ENCODE measurements at regions of chr7 and their contacts with region 1.

Region 1: GRCh38 chr7:142811154-142811737 is 40.5 kb downstream of the PRSS2 start:
- DNase-seq: no peak
- ATAC-seq: no peak
- H3K4me3 Mint-ChIP-seq: peak overlapping the region; percentile 69
- H3K27ac Mint-ChIP-seq: peak overlapping the region; percentile 99
- H3K4me1 Mint-ChIP-seq: peaks cover 76% of the 10 kb centered on the region
- H3K27me3 Mint-ChIP-seq: no peaks in the 10 kb centered on the region

Region 2: GRCh38 chr7:142535123-142535779 is 276.0 kb before region 1 on chr7:
- POLR2A ChIA-PET with region 1: interaction called, 23 read pairs
- DNase-seq: peak; percentile 73
- ATAC-seq: peak; percentile 91
- H3K4me3 Mint-ChIP-seq: peak overlapping the region; percentile 76
- H3K27ac Mint-ChIP-seq: peak overlapping the region; percentile 88
- H3K4me1 Mint-ChIP-seq: peaks cover 22% of the 10 kb centered on the region
- H3K27me3 Mint-ChIP-seq: peaks cover 2% of the 10 kb centered on the region

Region 3: DNA sequence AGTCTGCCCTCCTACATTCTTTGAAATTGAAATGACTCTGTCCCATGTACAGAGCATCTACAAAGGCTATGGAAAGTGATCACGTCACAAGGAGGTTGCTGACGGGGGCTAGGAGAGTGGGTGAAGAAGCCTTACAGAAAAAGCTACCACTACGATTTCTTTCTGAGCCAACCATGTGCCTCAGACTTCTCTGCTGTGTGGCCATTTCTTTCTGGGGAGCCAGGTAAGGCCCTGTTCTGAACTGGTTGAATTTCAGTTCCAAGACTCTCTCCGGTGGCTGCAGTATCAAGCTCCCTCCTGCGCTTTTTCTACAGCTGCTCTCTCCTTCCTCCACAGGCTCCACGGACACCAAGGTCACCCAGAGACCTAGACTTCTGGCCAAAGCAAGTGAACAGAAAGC is 174.5 kb before region 1 on chr7:
- POLR2A ChIA-PET with region 1: interaction called, 12 read pairs
- DNase-seq: no peak
- ATAC-seq: peak; percentile 61
- H3K4me3 Mint-ChIP-seq: peak overlapping the region; percentile 94
- H3K27ac Mint-ChIP-seq: peak overlapping the region; percentile 99
- H3K4me1 Mint-ChIP-seq: peaks cover 13% of the 10 kb centered on the region
- H3K27me3 Mint-ChIP-seq: peaks cover 6% of the 10 kb centered on the region

Region 4: DNA sequence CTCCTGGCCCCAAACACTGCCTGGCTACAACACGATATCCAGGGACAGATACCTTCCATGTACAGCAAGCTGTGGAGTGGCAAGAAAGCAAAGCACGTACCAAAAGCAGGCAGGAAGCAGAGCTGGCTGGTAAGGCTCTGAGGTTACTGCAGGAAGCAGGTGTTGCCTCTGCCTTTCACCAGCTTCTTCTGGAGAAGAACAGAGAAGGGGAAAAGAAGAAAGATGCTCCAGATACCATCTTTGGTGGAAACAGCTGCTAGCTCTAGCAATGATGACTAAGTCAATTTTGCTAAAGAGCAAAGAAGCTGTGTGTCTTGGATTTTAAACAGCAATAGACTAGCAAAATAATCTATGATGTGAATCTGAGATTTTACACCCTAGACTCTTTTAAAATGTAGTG is 96.9 kb before region 1 on chr7:
- POLR2A ChIA-PET with region 1: interaction called, 33 read pairs
- DNase-seq: no peak
- ATAC-seq: peak; percentile 40
- H3K4me3 Mint-ChIP-seq: peak overlapping the region; percentile 61
- H3K27ac Mint-ChIP-seq: peak overlapping the region; percentile 85
- H3K4me1 Mint-ChIP-seq: peaks cover 63% of the 10 kb centered on the region
- H3K27me3 Mint-ChIP-seq: no peaks in the 10 kb centered on the region

Region 5: GRCh38 chr7:142782922-142783900 is 28.0 kb before region 1 on chr7:
- POLR2A ChIA-PET with region 1: interaction called, 1,271 read pairs
- DNase-seq: peak; percentile 73
- ATAC-seq: peak; percentile 49
- H3K4me3 Mint-ChIP-seq: peak overlapping the region; percentile 81
- H3K27ac Mint-ChIP-seq: peak overlapping the region; percentile 87
- H3K4me1 Mint-ChIP-seq: peaks cover 8% of the 10 kb centered on the region
- H3K27me3 Mint-ChIP-seq: no peaks in the 10 kb centered on the region

Region 6: GRCh38 chr7:142853739-142854371 is 42.6 kb after region 1 on chr7:
- POLR2A ChIA-PET with region 1: no interaction called
- DNase-seq: peak; percentile 78
- ATAC-seq: peak; percentile 84
- H3K4me3 Mint-ChIP-seq: peak overlapping the region; percentile 93
- H3K27ac Mint-ChIP-seq: peak overlapping the region; percentile 72
- H3K4me1 Mint-ChIP-seq: peaks cover 11% of the 10 kb centered on the region
- H3K27me3 Mint-ChIP-seq: peaks cover 23% of the 10 kb centered on the region